ENCODE measurements at regions of chr17 and their contacts with region 1.

Region 1: DNA sequence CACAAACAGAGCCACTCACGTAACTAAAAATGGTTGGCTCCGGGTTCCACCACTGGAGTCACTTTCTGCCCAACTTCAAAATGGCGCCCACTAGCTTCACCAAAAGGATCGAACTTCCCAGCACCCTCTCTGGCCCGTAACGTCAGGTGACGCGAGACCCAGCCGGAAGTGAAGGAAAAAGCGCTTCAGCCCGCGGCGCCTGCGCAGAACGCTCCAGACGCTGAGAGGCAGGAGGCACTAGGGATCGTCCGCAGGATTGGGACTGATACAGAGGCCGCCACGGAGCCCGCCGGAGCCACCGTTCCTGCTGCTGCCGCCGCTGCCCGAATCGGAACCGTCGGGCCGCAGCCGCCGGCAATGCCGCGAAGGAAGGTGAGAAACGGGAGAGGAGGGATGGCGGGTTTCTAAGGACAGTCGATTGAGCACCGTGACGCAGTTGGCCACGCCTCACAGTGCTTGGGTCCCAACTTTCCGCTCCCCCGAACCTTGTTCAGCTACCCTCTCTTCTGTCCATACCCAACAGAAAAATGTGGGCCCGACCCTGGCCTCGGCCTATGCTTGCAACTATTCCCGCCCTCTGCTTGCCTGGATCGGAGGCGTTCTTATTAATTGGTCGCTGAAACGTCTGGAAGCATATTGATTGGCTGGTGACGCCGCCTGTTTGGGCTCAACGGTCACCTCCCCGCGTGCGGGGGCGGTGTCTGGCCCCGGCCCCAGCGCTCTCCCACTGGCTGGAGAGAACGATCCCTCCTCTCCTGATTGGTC is at the start of gene KAT7:
- DNase-seq: peak; percentile 98 to 99 (median 99)
- H3K4me3 ChIP-seq: peak within 1 kb of the TSS; percentile 92 to 96
- H3K4me3 Mint-ChIP-seq: peak within 1 kb of the TSS; percentile 93 to 99 (median 96)
- H3K27ac ChIP-seq: peak within 1 kb of the TSS; percentile 99
- H3K27ac Mint-ChIP-seq: peak within 1 kb of the TSS; percentile 91 to 100 (median 98)
- H3K4me1 ChIP-seq: peaks cover 54% of the 10 kb centered on the region
- H3K4me1 Mint-ChIP-seq: peaks cover 38 to 65% (median 53%) of the 10 kb centered on the region in 4 donors
- H3K27me3 ChIP-seq: no peaks in the 10 kb centered on the region
- H3K27me3 Mint-ChIP-seq: no peaks in the 10 kb centered on the region
- total RNA-seq, gene KAT7: 115 to 120 TPM

Region 2: DNA sequence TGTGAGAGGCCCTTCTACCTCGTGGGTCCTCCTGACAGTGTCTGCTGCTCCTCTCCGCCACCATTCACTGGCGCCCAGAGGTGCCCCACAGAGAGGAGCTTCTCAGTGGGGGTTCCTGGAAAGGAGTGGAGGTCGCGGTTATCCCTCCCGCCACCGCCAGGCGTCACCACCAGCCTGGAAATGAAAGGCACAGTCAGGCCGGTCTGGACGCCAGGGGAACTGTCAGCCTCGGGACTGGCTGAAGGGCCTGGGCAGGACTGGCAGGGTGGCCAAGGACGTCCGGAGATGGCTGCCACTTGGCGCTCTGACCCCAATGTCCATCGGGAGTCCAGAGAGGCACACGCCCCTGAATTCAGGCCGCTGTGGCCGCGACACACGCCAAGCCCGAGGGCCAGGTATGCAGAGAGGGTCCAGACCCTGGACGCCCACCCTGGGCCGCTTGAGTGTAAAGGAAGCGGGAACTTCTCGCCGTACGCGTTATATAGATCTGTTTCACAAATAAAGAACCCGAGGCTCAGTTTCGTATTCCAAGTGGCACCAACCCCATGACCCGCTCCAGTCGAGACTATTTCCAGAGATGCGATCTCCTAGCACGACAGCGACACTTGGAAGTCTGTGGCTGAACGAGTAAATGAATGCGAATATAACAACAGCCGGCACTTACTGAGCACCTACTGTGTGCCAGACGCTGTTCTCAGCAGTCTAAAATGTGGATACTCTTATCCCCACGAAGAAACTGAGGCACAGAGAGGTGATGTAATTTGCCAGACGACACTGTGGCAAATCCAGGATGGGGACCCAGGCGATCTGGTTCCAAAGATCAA is 220.6 kb before region 1 on chr17:
- CTCF ChIA-PET with region 1: interaction called, 3 read pairs
- POLR2A ChIA-PET with region 1: interaction called, 4 read pairs
- intact Hi-C with region 1: loop called (anchors 2 kb)
- DNase-seq: peak; percentile 68 to 77 (median 74)
- H3K4me3 ChIP-seq: peak overlapping the region in 1 of 2 donors; percentile 56
- H3K4me3 Mint-ChIP-seq: peak overlapping the region; percentile 28 to 82 (median 60)
- H3K27ac ChIP-seq: no peak overlapping the region
- H3K27ac Mint-ChIP-seq: peak overlapping the region in 2 of 7 donors; percentile 46 to 54
- H3K4me1 ChIP-seq: peaks cover 10% of the 10 kb centered on the region
- H3K4me1 Mint-ChIP-seq: peaks cover 8 to 29% (median 19%) of the 10 kb centered on the region in 4 donors
- H3K27me3 ChIP-seq: no peaks in the 10 kb centered on the region
- H3K27me3 Mint-ChIP-seq: peaks cover 6 to 11% of the 10 kb centered on the region in 2 donors

Region 3: DNA sequence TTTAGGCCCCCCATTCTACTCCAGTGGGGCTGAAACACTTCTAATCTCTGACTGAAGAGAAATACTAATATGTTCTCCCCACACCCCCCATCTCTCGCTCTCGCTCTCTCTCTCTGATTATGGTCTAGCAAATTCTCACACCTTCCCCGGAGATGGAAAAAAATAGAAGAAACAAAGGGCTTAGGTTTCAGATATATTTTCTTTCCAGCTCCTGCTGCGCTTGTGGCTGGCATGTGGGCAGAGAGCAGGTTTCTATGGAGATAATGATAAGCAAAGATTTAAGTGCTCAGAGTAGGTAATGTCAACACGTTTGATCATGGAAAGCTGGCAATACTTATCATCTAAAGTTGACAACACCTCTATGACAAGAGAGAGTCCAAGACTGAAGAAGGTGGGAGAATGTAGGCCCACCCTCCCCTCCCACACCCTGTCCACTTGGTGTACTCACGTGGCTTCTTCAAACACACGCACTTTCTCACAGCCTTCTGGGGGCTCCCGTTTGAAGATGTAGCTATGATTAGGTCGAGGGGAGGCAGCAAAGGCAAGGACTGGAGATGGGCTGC is 72.9 kb before region 1 on chr17:
- CTCF ChIA-PET with region 1: interaction called, 31 read pairs
- POLR2A ChIA-PET with region 1: interaction called, 17 read pairs
- intact Hi-C with region 1: loop called (anchors 2 kb)
- DNase-seq: peak; percentile 77 to 89 (median 84)
- H3K4me3 ChIP-seq: peak overlapping the region in 1 of 2 donors; percentile 1
- H3K4me3 Mint-ChIP-seq: peak overlapping the region; percentile 52 to 85 (median 60)
- H3K27ac ChIP-seq: peak overlapping the region; percentile 78
- H3K27ac Mint-ChIP-seq: peak overlapping the region; percentile 92 to 99 (median 98)
- H3K4me1 ChIP-seq: peaks cover 46% of the 10 kb centered on the region
- H3K4me1 Mint-ChIP-seq: peaks cover 37 to 53% (median 44%) of the 10 kb centered on the region in 4 donors
- H3K27me3 ChIP-seq: no peaks in the 10 kb centered on the region
- H3K27me3 Mint-ChIP-seq: peaks cover 0 to 2% of the 10 kb centered on the region in 2 donors

Region 4: DNA sequence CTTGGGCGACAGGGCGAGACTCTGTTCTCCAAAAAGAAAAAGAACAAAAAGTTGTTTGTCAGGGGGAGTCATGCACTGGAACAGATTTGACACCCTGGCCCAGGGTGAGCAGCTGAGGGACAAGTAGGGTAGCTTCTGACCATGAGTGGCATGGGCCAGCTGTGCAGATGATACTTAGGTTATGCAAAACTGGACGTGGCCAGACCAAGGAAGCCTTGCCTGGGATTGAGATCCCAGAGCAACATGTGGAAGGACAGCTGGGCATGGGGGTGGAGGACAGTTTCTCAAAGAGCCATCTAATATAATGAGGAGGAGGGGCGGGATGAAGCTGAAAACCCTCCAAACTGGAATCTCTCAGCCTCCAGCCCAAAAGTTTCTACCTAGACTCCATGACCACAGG is 61.3 kb before region 1 on chr17:
- CTCF ChIA-PET with region 1: no interaction called
- POLR2A ChIA-PET with region 1: no interaction called
- intact Hi-C with region 1: no loop called
- DNase-seq: no peak
- H3K4me3 ChIP-seq: no peak overlapping the region
- H3K4me3 Mint-ChIP-seq: no peak overlapping the region
- H3K27ac ChIP-seq: no peak overlapping the region
- H3K27ac Mint-ChIP-seq: peak overlapping the region; percentile 23 to 77 (median 61)
- H3K4me1 ChIP-seq: peaks cover 51% of the 10 kb centered on the region
- H3K4me1 Mint-ChIP-seq: peaks cover 36 to 73% (median 48%) of the 10 kb centered on the region in 4 donors
- H3K27me3 ChIP-seq: no peaks in the 10 kb centered on the region
- H3K27me3 Mint-ChIP-seq: no peaks in the 10 kb centered on the region

Region 5: DNA sequence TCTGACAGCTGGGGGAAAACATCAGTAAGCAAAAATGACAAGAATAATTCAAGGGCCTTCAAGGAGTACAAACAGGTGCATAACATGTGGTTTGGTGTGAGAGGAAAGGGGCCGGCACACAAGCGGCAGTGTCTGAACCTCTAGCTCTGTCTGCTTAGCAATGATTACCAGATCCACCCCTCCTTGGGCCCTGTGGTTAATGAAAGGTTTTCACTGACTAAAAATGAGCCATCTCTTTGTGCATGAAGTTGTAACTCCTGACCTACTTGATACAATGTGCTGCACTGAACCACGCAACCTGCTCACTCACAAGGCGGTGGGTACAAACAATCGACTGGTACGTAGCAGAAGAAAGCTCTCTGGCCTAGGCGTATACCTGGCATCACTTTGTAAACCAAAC is 39.9 kb before region 1 on chr17:
- CTCF ChIA-PET with region 1: interaction called, 3 read pairs
- POLR2A ChIA-PET with region 1: interaction called, 75 read pairs
- intact Hi-C with region 1: no loop called
- DNase-seq: peak; percentile 74 to 91 (median 80)
- H3K4me3 ChIP-seq: peak overlapping the region in 1 of 2 donors; percentile 27
- H3K4me3 Mint-ChIP-seq: peak overlapping the region; percentile 38 to 90 (median 80)
- H3K27ac ChIP-seq: peak overlapping the region; percentile 89
- H3K27ac Mint-ChIP-seq: peak overlapping the region; percentile 94 to 99 (median 97)
- H3K4me1 ChIP-seq: peaks cover 97% of the 10 kb centered on the region
- H3K4me1 Mint-ChIP-seq: peaks cover 56 to 91% (median 76%) of the 10 kb centered on the region in 4 donors
- H3K27me3 ChIP-seq: no peaks in the 10 kb centered on the region
- H3K27me3 Mint-ChIP-seq: no peaks in the 10 kb centered on the region

Region 6: DNA sequence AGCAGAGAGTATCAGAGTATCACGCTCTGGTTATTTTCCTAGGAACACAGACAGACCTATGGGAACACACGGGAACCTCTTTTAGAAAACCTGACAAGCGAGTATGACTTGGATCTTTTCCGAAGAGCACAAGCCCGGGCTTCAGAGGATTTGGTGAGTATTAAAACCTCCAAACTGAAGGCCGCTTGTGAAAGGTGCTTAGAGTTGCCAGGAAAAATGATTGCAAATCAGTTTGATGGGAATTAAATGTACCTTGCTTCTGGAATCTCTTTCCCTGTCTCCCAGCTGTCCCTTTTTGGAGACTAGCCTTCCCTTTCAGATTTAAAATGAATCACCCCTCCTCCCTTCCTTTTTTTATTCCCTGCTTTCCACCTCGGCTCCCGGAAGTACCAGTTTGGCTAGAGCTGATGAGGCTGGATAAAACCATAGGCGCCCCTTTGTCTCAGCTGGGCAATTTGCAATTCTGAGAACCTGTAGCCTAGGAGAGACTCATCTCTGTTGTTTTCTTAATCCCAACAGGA is 27.2 kb after region 1 on chr17:
- CTCF ChIA-PET with region 1: interaction called, 3 read pairs
- POLR2A ChIA-PET with region 1: interaction called, 39 read pairs
- intact Hi-C with region 1: loop called (anchors 1 kb)
- DNase-seq: no peak
- H3K4me3 ChIP-seq: no peak overlapping the region
- H3K4me3 Mint-ChIP-seq: peak overlapping the region in 1 of 8 donors; percentile 13
- H3K27ac ChIP-seq: no peak overlapping the region
- H3K27ac Mint-ChIP-seq: peak overlapping the region; percentile 48 to 99 (median 70)
- H3K4me1 ChIP-seq: peaks cover 63% of the 10 kb centered on the region
- H3K4me1 Mint-ChIP-seq: peaks cover 41 to 76% (median 61%) of the 10 kb centered on the region in 4 donors
- H3K27me3 ChIP-seq: no peaks in the 10 kb centered on the region
- H3K27me3 Mint-ChIP-seq: no peaks in the 10 kb centered on the region